ENCODE measurements at regions of chr6 and their contacts with region 1.

Region 1: DNA sequence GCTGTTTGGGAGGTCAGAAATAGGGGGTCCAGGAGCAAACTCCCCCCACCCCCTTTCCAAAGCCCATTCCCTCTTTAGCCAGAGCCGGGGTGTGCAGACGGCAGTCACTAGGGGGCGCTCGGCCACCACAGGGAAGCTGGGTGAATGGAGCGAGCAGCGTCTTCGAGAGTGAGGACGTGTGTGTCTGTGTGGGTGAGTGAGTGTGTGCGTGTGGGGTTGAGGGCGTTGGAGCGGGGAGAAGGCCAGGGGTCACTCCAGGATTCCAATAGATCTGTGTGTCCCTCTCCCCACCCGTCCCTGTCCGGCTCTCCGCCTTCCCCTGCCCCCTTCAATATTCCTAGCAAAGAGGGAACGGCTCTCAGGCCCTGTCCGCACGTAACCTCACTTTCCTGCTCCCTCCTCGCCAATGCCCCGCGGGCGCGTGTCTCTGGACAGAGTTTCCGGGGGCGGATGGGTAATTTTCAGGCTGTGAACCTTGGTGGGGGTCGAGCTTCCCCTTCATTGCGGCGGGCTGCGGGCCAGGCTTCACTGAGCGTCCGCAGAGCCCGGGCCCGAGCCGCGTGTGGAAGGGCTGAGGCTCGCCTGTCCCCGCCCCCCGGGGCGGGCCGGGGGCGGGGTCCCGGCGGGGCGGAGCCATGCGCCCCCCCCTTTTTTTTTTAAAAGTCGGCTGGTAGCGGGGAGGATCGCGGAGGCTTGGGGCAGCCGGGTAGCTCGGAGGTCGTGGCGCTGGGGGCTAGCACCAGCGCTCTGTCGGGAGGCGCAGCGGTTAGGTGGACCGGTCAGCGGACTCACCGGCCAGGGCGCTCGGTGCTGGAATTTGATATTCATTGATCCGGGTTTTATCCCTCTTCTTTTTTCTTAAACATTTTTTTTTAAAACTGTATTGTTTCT is at the start of gene VEGFA:
- DNase-seq: peak; percentile 96
- H3K4me3 ChIP-seq: peak within 1 kb of the TSS; percentile 73 to 83 (median 82)
- H3K27ac ChIP-seq: peak within 1 kb of the TSS; percentile 97 to 99 (median 97)
- H3K4me1 ChIP-seq: peaks cover 28 to 48% (median 47%) of the 10 kb centered on the region in 4 donors
- H3K27me3 ChIP-seq: no peaks in the 10 kb centered on the region
- CTCF ChIP-seq: peak in 2 of 3 experiments; percentile 98 to 99
- EP300 ChIP-seq: no peak
- POLR2A ChIP-seq: peak; percentile 58
- total RNA-seq, gene VEGFA: 39.2 to 58.5 (median 45.0) TPM

Region 2: DNA sequence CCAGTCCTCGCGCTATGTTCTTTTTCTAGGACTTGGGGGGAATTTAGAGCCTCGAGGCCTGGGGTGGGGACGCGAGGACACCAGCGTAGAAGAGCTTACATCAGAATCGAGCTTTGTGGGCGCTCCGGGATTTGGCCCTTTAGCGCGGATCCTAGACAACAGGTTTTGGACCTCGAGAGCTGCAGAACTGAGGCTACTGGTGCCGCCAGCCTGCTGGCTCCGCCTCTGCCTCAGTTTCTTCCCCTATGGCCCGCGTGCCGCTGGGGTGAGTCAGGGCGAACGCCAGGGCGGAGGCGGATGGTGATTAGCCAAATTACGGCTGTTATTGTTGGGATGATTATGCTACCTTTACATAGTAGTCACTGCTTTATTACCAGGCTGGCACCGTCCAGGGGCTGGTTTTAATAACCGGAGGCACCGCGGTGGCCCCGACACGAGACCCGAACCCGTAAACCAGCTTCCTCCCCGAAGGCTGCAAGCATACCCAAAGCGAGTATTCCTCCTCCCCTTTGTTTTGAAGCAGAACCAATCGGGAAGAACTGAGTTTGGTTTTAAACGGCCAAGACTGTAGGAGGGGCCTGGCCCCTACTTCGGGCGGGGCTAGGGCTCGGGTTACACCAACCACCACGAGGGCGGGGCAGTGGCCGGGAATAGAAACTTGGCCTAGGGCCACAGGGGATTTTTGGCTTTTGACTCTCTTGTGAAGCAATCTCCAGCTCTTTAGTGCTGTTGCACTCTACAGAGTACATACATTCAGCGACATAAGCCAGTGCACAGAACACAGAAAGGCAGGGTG is 140.1 kb before region 1 on chr6:
- intact Hi-C with region 1: loop called (anchors 5 kb)
- DNase-seq: peak; percentile 99
- H3K4me3 ChIP-seq: peak overlapping the region; percentile 78 to 99 (median 86)
- H3K27ac ChIP-seq: peak overlapping the region; percentile 91 to 98 (median 98)
- H3K4me1 ChIP-seq: peaks cover 22 to 37% (median 30%) of the 10 kb centered on the region in 4 donors
- H3K27me3 ChIP-seq: no peaks in the 10 kb centered on the region
- CTCF ChIP-seq: no peak
- EP300 ChIP-seq: no peak
- POLR2A ChIP-seq: no peak

Region 3: DNA sequence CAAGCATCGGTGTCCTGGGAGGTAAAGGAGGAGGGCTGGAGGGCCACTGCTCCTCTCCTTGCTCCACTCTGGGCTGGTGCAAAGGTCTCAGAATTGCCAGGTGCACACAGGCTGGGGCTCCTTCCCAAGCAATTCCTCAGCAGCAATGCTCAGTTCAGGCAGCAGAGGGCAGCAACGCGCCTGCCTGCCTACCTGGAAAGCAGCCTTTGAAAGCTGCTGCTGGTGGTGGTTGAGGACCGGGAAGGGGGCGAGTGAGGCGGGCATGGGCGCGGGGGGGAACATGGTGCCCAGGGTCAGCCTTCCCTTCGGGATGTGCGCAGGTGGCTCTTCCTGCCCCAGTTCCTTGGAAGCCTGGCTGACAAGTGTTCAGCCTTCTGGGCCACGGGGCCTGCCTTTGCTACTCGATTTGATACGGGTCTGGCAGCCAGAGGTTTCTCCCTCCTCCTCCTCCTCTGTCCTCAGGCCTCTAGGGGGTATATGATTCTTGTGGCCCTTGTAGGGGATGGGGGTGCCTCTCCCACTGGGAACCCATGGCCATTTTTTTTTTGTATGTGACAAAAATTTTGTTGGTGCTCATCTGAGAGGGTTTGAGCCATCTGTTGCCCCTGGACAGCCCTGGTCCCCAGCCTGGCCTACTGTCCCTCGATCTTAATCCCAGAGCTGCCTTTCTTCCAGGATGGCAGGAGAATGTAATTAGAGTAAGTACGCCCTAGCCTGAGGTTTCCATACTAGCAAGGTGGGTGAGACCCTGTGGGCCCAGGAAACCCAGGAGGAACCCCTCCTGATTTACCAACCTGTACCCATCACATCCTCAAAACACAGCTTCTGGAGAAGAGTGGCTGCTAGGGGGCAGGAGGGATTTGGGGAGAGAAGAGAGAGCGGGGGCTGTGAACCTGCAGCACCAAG is 102.3 kb before region 1 on chr6:
- intact Hi-C with region 1: loop called (anchors 5 kb)
- DNase-seq: peak; percentile 96
- H3K4me3 ChIP-seq: peak overlapping the region in 2 of 4 donors; percentile 20 to 25
- H3K27ac ChIP-seq: no peak overlapping the region
- H3K4me1 ChIP-seq: peaks cover 32 to 50% (median 45%) of the 10 kb centered on the region in 4 donors
- H3K27me3 ChIP-seq: no peaks in the 10 kb centered on the region
- CTCF ChIP-seq: peak; percentile 93 to 98 (median 96)
- EP300 ChIP-seq: no peak
- POLR2A ChIP-seq: no peak

Region 4: GRCh38 chr6:43798688-43799444 is 29.1 kb after region 1 on chr6:
- intact Hi-C with region 1: no loop called
- DNase-seq: no peak
- H3K4me3 ChIP-seq: no peak overlapping the region
- H3K27ac ChIP-seq: no peak overlapping the region
- H3K4me1 ChIP-seq: peaks cover 0 to 25% (median 0%) of the 10 kb centered on the region in 4 donors
- H3K27me3 ChIP-seq: no peaks in the 10 kb centered on the region
- CTCF ChIP-seq: no peak
- EP300 ChIP-seq: no peak
- POLR2A ChIP-seq: no peak

Region 5: GRCh38 chr6:43977404-43978111 is 207.8 kb after region 1 on chr6:
- intact Hi-C with region 1: loop called (anchors 10 kb)
- DNase-seq: no peak
- H3K4me3 ChIP-seq: no peak overlapping the region
- H3K27ac ChIP-seq: no peak overlapping the region
- H3K4me1 ChIP-seq: peaks cover 11 to 25% (median 23%) of the 10 kb centered on the region in 4 donors
- H3K27me3 ChIP-seq: no peaks in the 10 kb centered on the region
- CTCF ChIP-seq: no peak
- EP300 ChIP-seq: no peak
- POLR2A ChIP-seq: no peak

Region 6: GRCh38 chr6:44543664-44544063 is 773.9 kb after region 1 on chr6:
- intact Hi-C with region 1: no loop called
- DNase-seq: no peak
- H3K4me3 ChIP-seq: no peak overlapping the region
- H3K27ac ChIP-seq: no peak overlapping the region
- H3K4me1 ChIP-seq: no peaks in the 10 kb centered on the region
- H3K27me3 ChIP-seq: no peaks in the 10 kb centered on the region
- CTCF ChIP-seq: no peak
- EP300 ChIP-seq: no peak
- POLR2A ChIP-seq: no peak